Activated CD4-positive, alpha-beta T cell treated with anti-CD3 and anti-CD28 coated beads for 36 hours (primary cell): ENCODE measurements at regions of chr10 and their contacts with region 1.

Region 1: GRCh38 chr10:117167789-117168674 is 29.3 kb upstream of the KCNK18 start:
- DNase-seq: peak; percentile 85
- ATAC-seq: peak; percentile 88
- H3K4me3 Mint-ChIP-seq: peak overlapping the region; percentile 26
- H3K27ac Mint-ChIP-seq: no peak overlapping the region
- H3K4me1 Mint-ChIP-seq: peaks cover 40% of the 10 kb centered on the region
- H3K27me3 Mint-ChIP-seq: peaks cover 72% of the 10 kb centered on the region

Region 2: GRCh38 chr10:116272440-116273283 is 895.4 kb before region 1 on chr10 and contains the start of gene GFRA1:
- CTCF ChIA-PET with region 1: no interaction called
- POLR2A ChIA-PET with region 1: no interaction called
- intact Hi-C with region 1: loop called in 1 of 2 experiments (anchors 10 kb)
- DNase-seq: peak; percentile 14
- ATAC-seq: peak; percentile 51
- H3K4me3 Mint-ChIP-seq: peak within 1 kb of the TSS; percentile 58
- H3K27ac Mint-ChIP-seq: no peak within 1 kb of the TSS
- H3K4me1 Mint-ChIP-seq: peaks cover 13% of the 10 kb centered on the region
- H3K27me3 Mint-ChIP-seq: peaks cover 64% of the 10 kb centered on the region
- total RNA-seq, gene GFRA1: 0.09 to 0.11 TPM

Region 3: GRCh38 chr10:116787893-116788665 is 380.0 kb before region 1 on chr10:
- CTCF ChIA-PET with region 1: interaction called, 27 read pairs
- POLR2A ChIA-PET with region 1: no interaction called
- intact Hi-C with region 1: no loop called
- DNase-seq: peak; percentile 88
- ATAC-seq: peak; percentile 89
- H3K4me3 Mint-ChIP-seq: peak overlapping the region; percentile 41
- H3K27ac Mint-ChIP-seq: peak overlapping the region; percentile 37
- H3K4me1 Mint-ChIP-seq: peaks cover 21% of the 10 kb centered on the region
- H3K27me3 Mint-ChIP-seq: peaks cover 26% of the 10 kb centered on the region

Region 4: DNA sequence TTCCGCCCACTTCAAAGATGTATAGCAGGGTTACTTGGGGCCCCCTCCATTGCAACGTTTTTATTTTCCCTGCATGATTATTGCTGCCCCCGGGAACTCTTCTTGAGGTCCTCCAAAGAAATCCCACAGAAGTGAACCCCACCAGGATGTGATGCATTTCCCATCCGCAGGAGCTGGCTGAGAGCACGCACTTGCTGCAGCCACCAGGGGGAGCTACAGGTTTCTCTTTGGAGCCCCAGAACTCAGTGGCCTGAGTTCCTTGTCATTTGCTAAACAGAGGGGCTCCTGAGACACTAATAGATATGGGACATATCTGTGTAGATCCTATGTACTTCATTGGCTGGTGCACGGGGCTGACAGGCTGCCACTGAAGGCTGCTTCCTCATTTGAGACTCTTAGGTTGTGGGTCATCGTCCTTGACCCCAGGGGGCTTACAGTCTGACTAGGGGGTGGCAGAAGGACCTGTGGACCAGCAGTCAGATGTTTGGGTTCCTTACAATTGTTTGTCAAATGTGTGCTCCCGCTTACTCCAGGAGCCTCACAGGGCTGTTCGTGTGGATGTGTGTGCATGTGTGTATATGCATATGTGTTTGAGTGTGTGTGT is 371.0 kb before region 1 on chr10:
- CTCF ChIA-PET with region 1: interaction called, 15 read pairs
- POLR2A ChIA-PET with region 1: no interaction called
- intact Hi-C with region 1: no loop called
- DNase-seq: peak; percentile 86
- ATAC-seq: peak; percentile 68
- H3K4me3 Mint-ChIP-seq: no peak overlapping the region
- H3K27ac Mint-ChIP-seq: no peak overlapping the region
- H3K4me1 Mint-ChIP-seq: peaks cover 7% of the 10 kb centered on the region
- H3K27me3 Mint-ChIP-seq: peaks cover 25% of the 10 kb centered on the region

Region 5: DNA sequence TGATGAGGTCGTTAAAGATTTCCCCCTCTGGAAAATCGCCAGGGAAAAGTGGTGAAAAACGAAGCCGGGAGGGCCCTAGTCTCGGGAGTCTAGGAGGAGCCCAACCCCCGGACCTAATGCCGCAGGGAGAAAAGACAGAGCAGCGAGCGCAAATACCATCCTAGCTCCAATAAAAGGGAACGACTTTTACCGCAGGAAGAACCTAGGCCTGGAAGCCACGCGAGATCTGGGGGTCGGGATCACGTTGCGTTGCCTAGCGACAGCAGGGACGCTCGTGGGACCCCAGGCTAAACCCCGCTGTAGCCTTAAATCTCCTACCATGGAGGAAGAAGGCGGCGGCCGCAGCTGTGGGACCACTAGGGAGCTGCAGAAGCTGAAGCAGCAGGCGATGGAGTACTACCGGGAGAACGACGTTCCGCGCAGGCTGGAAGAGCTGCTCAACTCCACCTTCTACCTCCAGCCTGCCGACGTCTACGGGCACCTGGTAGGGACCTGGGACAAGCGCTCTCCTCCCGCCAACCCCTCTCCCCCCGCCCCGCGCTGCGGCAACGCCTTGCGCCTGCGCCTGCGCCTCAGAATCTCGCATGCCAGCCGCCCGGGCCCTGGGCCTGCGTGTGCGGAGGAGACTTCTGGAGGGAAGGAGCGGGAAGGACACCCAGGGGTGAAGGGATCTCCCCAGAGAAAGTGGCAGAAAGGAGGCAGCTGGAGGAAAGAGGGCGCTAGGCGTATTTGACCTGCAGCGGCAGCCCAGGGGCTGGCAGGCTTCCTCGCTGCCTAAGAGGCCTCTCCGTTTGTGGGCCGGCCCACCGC is 318.6 kb before region 1 on chr10 and contains the start of gene ENO4:
- CTCF ChIA-PET with region 1: interaction called, 6 read pairs
- POLR2A ChIA-PET with region 1: no interaction called
- intact Hi-C with region 1: loop called in 1 of 2 experiments (anchors 2 kb)
- DNase-seq: peak; percentile 62
- ATAC-seq: peak; percentile 61
- H3K4me3 Mint-ChIP-seq: peak within 1 kb of the TSS; percentile 47
- H3K27ac Mint-ChIP-seq: no peak within 1 kb of the TSS
- H3K4me1 Mint-ChIP-seq: peaks cover 13% of the 10 kb centered on the region
- H3K27me3 Mint-ChIP-seq: peaks cover 53% of the 10 kb centered on the region
- total RNA-seq, gene ENO4: not detected

Region 6: GRCh38 chr10:117131376-117132327 is 36.4 kb before region 1 on chr10:
- CTCF ChIA-PET with region 1: interaction called, 34 read pairs
- POLR2A ChIA-PET with region 1: no interaction called
- intact Hi-C with region 1: loop called (anchors 2 kb)
- DNase-seq: peak; percentile 45
- ATAC-seq: no peak
- H3K4me3 Mint-ChIP-seq: no peak overlapping the region
- H3K27ac Mint-ChIP-seq: no peak overlapping the region
- H3K4me1 Mint-ChIP-seq: peaks cover 35% of the 10 kb centered on the region
- H3K27me3 Mint-ChIP-seq: peaks cover 75% of the 10 kb centered on the region

Region 7: GRCh38 chr10:117137031-117137910 is 30.8 kb before region 1 on chr10:
- CTCF ChIA-PET with region 1: interaction called, 34 read pairs
- POLR2A ChIA-PET with region 1: interaction called, 3 read pairs
- intact Hi-C with region 1: loop called (anchors 1 to 2 kb)
- DNase-seq: peak; percentile 31
- ATAC-seq: no peak
- H3K4me3 Mint-ChIP-seq: peak overlapping the region; percentile 23
- H3K27ac Mint-ChIP-seq: no peak overlapping the region
- H3K4me1 Mint-ChIP-seq: peaks cover 29% of the 10 kb centered on the region
- H3K27me3 Mint-ChIP-seq: peaks cover 66% of the 10 kb centered on the region